Calu3 (cell line): ENCODE measurements at regions of chr14 and their contacts with region 1.

Region 1: GRCh38 chr14:99266181-99267178 is 5.5 kb downstream of the BCL11B start:
- DNase-seq: peak; percentile 84
- H3K4me3 Mint-ChIP-seq: peak overlapping the region; percentile 30
- H3K27ac Mint-ChIP-seq: no peak overlapping the region
- H3K4me1 Mint-ChIP-seq: peaks cover 22% of the 10 kb centered on the region
- H3K27me3 Mint-ChIP-seq: peaks cover 86% of the 10 kb centered on the region
- CTCF ChIP-seq: peak; percentile 89

Region 2: GRCh38 chr14:97978341-97978740 is 1288.1 kb before region 1 on chr14:
- CTCF ChIA-PET with region 1: no interaction called
- intact Hi-C with region 1: loop called (anchors 5 kb)
- DNase-seq: peak; percentile 46
- H3K4me3 Mint-ChIP-seq: no peak overlapping the region
- H3K27ac Mint-ChIP-seq: no peak overlapping the region
- H3K4me1 Mint-ChIP-seq: no peaks in the 10 kb centered on the region
- H3K27me3 Mint-ChIP-seq: no peaks in the 10 kb centered on the region
- CTCF ChIP-seq: no peak

Region 3: DNA sequence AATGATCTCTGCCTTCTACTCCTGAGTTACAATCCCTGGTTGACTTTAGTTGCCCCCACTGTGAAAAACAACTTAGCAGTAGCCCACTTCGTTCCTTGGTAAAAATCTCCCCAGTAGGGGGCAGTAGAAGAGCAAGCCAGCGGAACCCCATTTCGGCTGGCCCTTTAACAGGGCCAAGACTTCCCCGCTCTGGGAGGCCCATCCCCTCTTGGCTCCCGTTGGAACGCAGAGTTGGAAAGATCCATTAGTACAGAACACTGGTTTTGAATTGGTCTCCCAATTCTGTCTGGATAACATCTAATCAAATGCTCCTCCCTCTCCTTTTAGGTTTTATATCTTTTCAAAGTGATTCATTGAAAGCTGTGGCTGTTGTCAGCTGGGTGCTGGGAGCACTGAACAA is 1127.8 kb before region 1 on chr14:
- CTCF ChIA-PET with region 1: no interaction called
- intact Hi-C with region 1: loop called (anchors 2 kb)
- DNase-seq: peak; percentile 4
- H3K4me3 Mint-ChIP-seq: no peak overlapping the region
- H3K27ac Mint-ChIP-seq: no peak overlapping the region
- H3K4me1 Mint-ChIP-seq: no peaks in the 10 kb centered on the region
- H3K27me3 Mint-ChIP-seq: no peaks in the 10 kb centered on the region
- CTCF ChIP-seq: peak; percentile 26

Region 4: GRCh38 chr14:98334186-98334585 is 932.3 kb before region 1 on chr14:
- CTCF ChIA-PET with region 1: no interaction called
- intact Hi-C with region 1: loop called (anchors 10 kb)
- DNase-seq: no peak
- H3K4me3 Mint-ChIP-seq: no peak overlapping the region
- H3K27ac Mint-ChIP-seq: no peak overlapping the region
- H3K4me1 Mint-ChIP-seq: no peaks in the 10 kb centered on the region
- H3K27me3 Mint-ChIP-seq: no peaks in the 10 kb centered on the region
- CTCF ChIP-seq: no peak

Region 5: DNA sequence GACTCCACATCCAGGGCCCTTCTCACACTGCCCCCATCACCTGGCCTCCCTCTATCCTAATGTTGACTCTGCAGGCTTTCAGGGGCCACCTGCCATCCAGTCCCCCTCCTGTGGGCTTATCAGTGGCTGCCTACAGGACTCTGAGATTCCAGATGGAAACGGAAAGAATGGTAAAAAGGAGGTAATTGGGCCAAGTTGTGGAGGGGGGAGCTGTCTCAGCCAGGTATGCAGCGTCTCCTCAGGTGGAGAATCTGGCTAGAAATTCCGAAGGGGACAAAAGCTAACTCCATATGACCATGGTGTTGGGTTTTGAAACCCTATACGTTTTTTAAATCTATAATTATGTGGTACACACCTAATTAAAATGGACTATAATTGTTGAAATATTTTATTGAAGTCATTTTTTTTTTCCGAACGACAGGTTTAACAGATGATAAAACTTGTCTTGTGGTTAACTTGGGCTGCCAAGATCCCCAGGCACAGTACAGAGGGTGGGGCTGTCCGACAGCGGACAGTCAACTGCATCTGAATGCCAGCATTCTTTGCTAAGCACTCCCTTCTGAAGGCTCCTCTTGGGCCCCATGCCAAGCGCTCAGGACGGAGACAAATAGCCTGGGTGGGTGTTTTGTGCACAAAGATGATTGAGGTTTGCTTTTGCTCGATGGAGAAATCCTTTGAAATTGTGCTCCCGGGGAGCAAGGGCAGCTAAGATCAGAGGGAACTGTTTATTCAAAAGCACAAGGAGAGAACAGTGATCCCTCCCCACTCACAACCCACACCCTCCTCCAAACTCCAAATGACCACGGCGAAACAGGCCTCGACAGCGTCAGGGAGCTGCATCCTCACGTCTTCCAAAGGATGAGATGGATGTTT is 360.1 kb before region 1 on chr14:
- CTCF ChIA-PET with region 1: no interaction called
- intact Hi-C with region 1: loop called (anchors 5 kb)
- DNase-seq: peak; percentile 67
- H3K4me3 Mint-ChIP-seq: no peak overlapping the region
- H3K27ac Mint-ChIP-seq: no peak overlapping the region
- H3K4me1 Mint-ChIP-seq: peaks cover 32% of the 10 kb centered on the region
- H3K27me3 Mint-ChIP-seq: peaks cover 21% of the 10 kb centered on the region
- CTCF ChIP-seq: no peak

Region 6: GRCh38 chr14:99064226-99064954 is 202.1 kb before region 1 on chr14:
- CTCF ChIA-PET with region 1: interaction called, 3 read pairs
- intact Hi-C with region 1: loop called (anchors 5 kb)
- DNase-seq: peak; percentile 32
- H3K4me3 Mint-ChIP-seq: peak overlapping the region; percentile 58
- H3K27ac Mint-ChIP-seq: peak overlapping the region; percentile 91
- H3K4me1 Mint-ChIP-seq: peaks cover 35% of the 10 kb centered on the region
- H3K27me3 Mint-ChIP-seq: no peaks in the 10 kb centered on the region
- CTCF ChIP-seq: no peak